CD8-positive, alpha-beta T cell (primary cell): ENCODE measurements at regions of chr3 and their contacts with region 1.

Region 1: DNA sequence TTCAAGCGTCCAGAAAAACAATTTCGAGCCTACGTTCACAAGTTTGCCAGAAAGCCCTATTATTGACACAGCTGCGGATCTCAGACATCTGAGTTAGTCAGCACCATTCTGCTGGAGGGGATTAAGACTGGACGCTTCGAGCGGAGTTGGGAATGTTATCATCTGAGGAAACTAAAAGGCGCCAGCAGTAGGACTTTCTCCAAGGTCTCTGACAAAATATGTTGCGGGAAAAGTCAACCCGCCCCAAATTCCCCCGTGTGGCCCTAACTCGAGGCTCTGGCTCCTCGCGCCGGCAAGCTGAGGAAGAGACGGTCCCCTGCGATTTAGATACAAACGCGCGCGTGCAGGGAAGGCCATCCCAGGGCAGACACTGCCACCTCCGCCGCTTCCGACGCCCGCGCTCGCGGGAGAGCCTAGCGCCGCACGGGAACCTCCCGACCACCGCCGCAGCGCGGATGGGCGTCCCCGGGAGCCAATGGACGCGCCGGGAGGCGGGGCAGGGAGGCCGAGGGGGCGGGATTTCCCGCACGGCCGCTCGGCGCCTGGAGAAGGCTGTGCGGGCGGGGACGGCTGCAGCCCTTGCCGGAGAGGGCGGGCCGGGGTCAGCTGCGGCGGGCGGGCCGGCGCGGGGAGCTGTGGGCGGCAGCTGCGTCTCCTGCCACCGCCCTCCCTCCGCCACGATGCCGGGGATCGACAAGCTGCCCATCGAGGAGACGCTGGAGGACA is at the start of gene APPL1:
- DNase-seq: peak; percentile 68 to 93 (median 87)
- ATAC-seq: peak; percentile 89
- H3K4me3 ChIP-seq: peak within 1 kb of the TSS; percentile 82 to 91
- H3K4me3 Mint-ChIP-seq: peak within 1 kb of the TSS; percentile 93
- H3K27ac ChIP-seq: peak within 1 kb of the TSS; percentile 48 to 68
- H3K27ac Mint-ChIP-seq: peak within 1 kb of the TSS; percentile 89
- H3K4me1 ChIP-seq: peaks cover 11% of the 10 kb centered on the region
- H3K4me1 Mint-ChIP-seq: peaks cover 30% of the 10 kb centered on the region
- H3K27me3 ChIP-seq: no peaks in the 10 kb centered on the region
- H3K27me3 Mint-ChIP-seq: no peaks in the 10 kb centered on the region
- CTCF ChIP-seq: no peak
- total RNA-seq, gene APPL1: 19.3 to 23.4 TPM

Region 2: DNA sequence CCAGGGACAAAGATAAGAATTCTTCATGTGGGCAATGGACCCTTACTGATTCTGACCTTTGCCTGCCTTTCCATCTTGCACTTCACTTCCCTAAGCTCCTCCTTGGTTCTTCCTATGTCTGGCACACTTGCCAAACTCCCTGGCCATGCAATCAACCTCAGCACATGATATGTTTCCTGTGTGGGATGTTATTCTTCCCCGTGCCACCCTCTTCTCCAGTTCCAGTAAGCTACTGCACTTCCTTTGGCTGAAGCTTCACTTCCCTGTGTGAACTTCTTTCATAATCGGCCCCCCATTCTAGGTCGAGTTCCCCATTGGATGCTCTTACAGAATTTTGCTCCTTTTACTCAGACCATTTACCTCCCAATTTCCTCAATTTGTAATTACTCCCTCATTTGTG is 533.6 kb before region 1 on chr3:
- CTCF ChIA-PET with region 1: no interaction called
- POLR2A ChIA-PET with region 1: no interaction called
- intact Hi-C with region 1: loop called (anchors 2 to 10 kb)
- DNase-seq: peak in 1 of 9 experiments; percentile 38
- ATAC-seq: no peak
- H3K4me3 ChIP-seq: no peak overlapping the region
- H3K4me3 Mint-ChIP-seq: peak overlapping the region; percentile 80
- H3K27ac ChIP-seq: peak overlapping the region in 1 of 2 experiments; percentile 60
- H3K27ac Mint-ChIP-seq: peak overlapping the region; percentile 89
- H3K4me1 ChIP-seq: peaks cover 35% of the 10 kb centered on the region
- H3K4me1 Mint-ChIP-seq: peaks cover 46% of the 10 kb centered on the region
- H3K27me3 ChIP-seq: no peaks in the 10 kb centered on the region
- H3K27me3 Mint-ChIP-seq: no peaks in the 10 kb centered on the region
- CTCF ChIP-seq: no peak

Region 3: DNA sequence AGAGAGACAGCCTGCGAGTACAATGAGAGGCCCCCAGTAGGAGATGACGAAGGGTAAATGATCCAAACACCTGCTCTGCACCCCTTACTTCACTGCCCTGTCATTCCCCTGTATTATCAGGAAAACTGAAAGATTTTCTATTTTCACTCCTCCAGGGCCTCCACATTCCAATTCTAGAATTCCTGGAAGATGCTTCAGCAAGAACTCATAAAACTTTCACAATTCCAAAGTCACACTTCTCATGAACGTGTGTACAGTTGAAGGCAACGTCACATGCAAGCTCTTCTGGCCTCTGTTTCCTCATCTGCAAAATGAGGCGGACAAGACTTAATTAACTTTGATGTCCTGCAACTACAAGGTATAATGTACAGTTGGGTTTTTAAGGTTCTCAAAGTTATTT is 229.7 kb before region 1 on chr3:
- CTCF ChIA-PET with region 1: no interaction called
- POLR2A ChIA-PET with region 1: no interaction called
- intact Hi-C with region 1: loop called in 1 of 2 experiments (anchors 10 kb)
- DNase-seq: no peak
- ATAC-seq: no peak
- H3K4me3 ChIP-seq: no peak overlapping the region
- H3K4me3 Mint-ChIP-seq: no peak overlapping the region
- H3K27ac ChIP-seq: no peak overlapping the region
- H3K27ac Mint-ChIP-seq: no peak overlapping the region
- H3K4me1 ChIP-seq: no peaks in the 10 kb centered on the region
- H3K4me1 Mint-ChIP-seq: peaks cover 2% of the 10 kb centered on the region
- H3K27me3 ChIP-seq: no peaks in the 10 kb centered on the region
- H3K27me3 Mint-ChIP-seq: peaks cover 2% of the 10 kb centered on the region
- CTCF ChIP-seq: no peak

Region 4: GRCh38 chr3:57555738-57556458 is 328.5 kb after region 1 on chr3 and contains the start of gene PDE12:
- CTCF ChIA-PET with region 1: no interaction called
- POLR2A ChIA-PET with region 1: no interaction called
- intact Hi-C with region 1: loop called (anchors 5 kb)
- DNase-seq: peak; percentile 66 to 91 (median 81)
- ATAC-seq: peak; percentile 69
- H3K4me3 ChIP-seq: peak within 1 kb of the TSS; percentile 77 to 96
- H3K4me3 Mint-ChIP-seq: peak within 1 kb of the TSS; percentile 88
- H3K27ac ChIP-seq: peak within 1 kb of the TSS; percentile 87 to 98
- H3K27ac Mint-ChIP-seq: peak within 1 kb of the TSS; percentile 99
- H3K4me1 ChIP-seq: peaks cover 31% of the 10 kb centered on the region
- H3K4me1 Mint-ChIP-seq: peaks cover 40% of the 10 kb centered on the region
- H3K27me3 ChIP-seq: no peaks in the 10 kb centered on the region
- H3K27me3 Mint-ChIP-seq: no peaks in the 10 kb centered on the region
- CTCF ChIP-seq: no peak
- total RNA-seq, gene PDE12: 44.8 to 45.9 TPM

Region 5: DNA sequence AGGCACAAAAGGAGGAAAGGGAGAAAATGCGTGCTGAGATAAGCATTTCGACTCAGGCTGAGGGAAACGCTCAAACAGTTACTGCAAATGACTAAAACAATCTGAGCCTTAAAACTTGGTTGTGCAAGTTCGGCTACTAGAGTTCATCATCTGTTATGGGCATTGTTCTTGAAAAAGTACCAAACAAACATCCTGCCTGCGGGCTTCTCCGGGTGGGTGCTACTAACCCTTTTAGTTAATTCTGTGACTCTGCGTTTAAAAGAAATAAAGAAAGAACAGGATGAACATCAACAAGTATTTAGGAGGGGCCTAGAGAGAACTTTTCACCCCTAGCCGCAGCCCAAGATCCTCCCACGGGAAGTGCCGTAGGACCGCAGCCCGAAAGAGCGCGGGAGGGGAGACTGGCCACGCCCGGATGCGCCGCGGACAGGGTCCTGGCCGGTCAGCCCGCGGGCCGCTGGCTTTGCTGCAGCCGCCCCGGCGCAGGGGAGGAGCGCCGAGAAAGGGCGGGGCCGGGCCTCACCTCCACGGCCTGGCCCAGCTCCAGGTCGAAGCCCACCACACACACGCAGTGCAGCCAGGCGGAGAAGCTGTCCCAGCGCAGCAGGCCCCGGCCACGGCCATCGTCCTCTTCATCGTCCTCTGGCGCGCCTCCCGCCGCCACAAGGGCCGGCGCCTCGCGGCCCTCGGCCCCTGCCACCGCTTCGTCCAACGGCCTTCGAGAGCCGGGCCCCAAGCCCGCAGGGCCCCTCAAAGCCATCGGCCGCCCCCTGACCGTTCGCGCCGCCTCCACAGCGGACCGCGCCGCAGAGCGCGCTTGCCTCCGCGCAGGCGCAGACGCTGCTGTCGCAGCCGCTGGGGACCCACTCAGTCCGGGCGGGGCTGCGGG is 465.1 kb after region 1 on chr3 and contains the start of gene DENND6A:
- CTCF ChIA-PET with region 1: no interaction called
- POLR2A ChIA-PET with region 1: no interaction called
- intact Hi-C with region 1: loop called (anchors 2 to 10 kb)
- DNase-seq: peak; percentile 91 to 98 (median 96)
- ATAC-seq: peak; percentile 73
- H3K4me3 ChIP-seq: peak within 1 kb of the TSS; percentile 55 to 78
- H3K4me3 Mint-ChIP-seq: peak within 1 kb of the TSS; percentile 92
- H3K27ac ChIP-seq: peak within 1 kb of the TSS; percentile 69 to 95
- H3K27ac Mint-ChIP-seq: peak within 1 kb of the TSS; percentile 89
- H3K4me1 ChIP-seq: peaks cover 45% of the 10 kb centered on the region
- H3K4me1 Mint-ChIP-seq: peaks cover 42% of the 10 kb centered on the region
- H3K27me3 ChIP-seq: no peaks in the 10 kb centered on the region
- H3K27me3 Mint-ChIP-seq: no peaks in the 10 kb centered on the region
- CTCF ChIP-seq: no peak
- total RNA-seq, gene DENND6A: 74.6 to 79.3 TPM

Region 6: DNA sequence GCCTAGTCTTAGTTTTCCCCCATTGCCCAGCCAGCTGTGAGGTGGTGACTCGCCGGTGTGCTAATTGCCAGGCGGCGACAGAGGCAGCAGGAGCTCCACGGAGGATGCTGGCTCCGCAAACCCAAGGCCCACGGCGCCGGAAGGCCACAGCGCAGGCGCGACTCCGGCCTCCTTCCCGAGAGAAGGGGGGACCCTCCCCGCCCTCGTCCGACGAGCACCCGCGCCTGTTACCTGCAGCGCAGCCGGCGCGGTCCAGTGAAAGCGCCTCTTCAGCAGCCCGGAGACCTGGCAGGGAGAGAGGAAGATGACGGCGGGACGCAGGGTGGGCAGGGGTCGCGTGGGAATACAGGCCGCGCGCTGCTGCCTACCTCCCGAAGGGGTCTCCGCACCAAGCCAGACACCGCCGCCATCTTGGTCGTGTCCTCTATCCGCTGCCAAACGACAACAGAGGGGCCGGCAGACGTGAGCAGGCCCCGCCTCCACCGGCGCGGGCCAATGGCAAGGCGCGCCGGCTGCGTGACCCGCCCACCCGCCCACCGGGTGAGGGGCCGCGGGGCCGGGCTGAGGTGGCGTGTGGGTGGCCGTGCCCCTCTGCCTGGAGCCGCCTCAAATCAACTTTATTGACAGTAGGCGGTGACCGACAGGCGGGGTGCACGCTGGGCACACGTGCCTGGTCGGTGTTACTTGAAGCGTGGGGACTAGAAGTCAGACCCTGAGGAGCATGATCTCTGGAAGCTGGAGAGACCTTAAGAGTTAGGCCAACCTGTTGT is 1206.2 kb after region 1 on chr3 and contains the start of gene PDHB:
- CTCF ChIA-PET with region 1: no interaction called
- POLR2A ChIA-PET with region 1: no interaction called
- intact Hi-C with region 1: loop called in 1 of 2 experiments (anchors 5 kb)
- DNase-seq: peak; percentile 74 to 94 (median 88)
- ATAC-seq: peak; percentile 97
- H3K4me3 ChIP-seq: peak within 1 kb of the TSS; percentile 88 to 98
- H3K4me3 Mint-ChIP-seq: peak within 1 kb of the TSS; percentile 92
- H3K27ac ChIP-seq: peak within 1 kb of the TSS; percentile 86 to 87
- H3K27ac Mint-ChIP-seq: peak within 1 kb of the TSS; percentile 97
- H3K4me1 ChIP-seq: peaks cover 10% of the 10 kb centered on the region
- H3K4me1 Mint-ChIP-seq: peaks cover 25% of the 10 kb centered on the region
- H3K27me3 ChIP-seq: no peaks in the 10 kb centered on the region
- H3K27me3 Mint-ChIP-seq: no peaks in the 10 kb centered on the region
- CTCF ChIP-seq: no peak
- total RNA-seq, gene PDHB: 32.5 to 33.2 TPM